Dorsolateral prefrontal cortex (tissue), 120 donors: ENCODE measurements at regions of chr2 and their contacts with region 1.

Region 1: GRCh38 chr2:57100436-57100835 is 916.6 kb downstream of the CCDC85A start:
- DNase-seq: no peak
- H3K4me3 ChIP-seq: no peak overlapping the region
- H3K27ac ChIP-seq: no peak overlapping the region
- H3K27me3 ChIP-seq: no peaks in the 10 kb centered on the region
- CTCF ChIP-seq: no peak

Region 2: DNA sequence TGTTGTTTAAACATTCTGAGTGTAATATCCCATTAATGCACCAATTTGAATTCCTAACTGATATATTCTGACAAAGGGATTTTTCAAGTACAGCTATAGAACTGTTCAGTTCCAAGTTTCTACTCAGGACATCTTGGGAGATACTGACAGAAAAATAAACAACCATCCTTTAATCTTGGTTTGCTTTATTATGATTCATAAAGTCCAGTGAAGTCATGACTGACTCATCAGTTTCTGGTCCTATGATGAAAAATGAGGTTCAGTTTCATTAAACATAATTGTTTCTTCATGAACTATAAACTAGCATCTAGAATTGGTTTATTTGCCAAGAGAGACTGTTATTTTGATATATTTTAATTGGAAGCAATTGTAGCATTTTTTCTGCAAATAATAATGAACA is 20.4 kb before region 1 on chr2:
- intact Hi-C with region 1: loop called in 1 of 2 experiments (anchors 1 kb)
- DNase-seq: no peak
- H3K4me3 ChIP-seq: no peak overlapping the region
- H3K27ac ChIP-seq: no peak overlapping the region
- H3K27me3 ChIP-seq: no peaks in the 10 kb centered on the region
- CTCF ChIP-seq: no peak

Region 3: GRCh38 chr2:57523304-57523703 is 422.9 kb after region 1 on chr2:
- intact Hi-C with region 1: no loop called
- DNase-seq: no peak
- H3K4me3 ChIP-seq: no peak overlapping the region
- H3K27ac ChIP-seq: no peak overlapping the region
- H3K27me3 ChIP-seq: no peaks in the 10 kb centered on the region
- CTCF ChIP-seq: no peak

Region 4: GRCh38 chr2:57776916-57777315 is 676.5 kb after region 1 on chr2:
- intact Hi-C with region 1: no loop called
- DNase-seq: no peak
- H3K4me3 ChIP-seq: no peak overlapping the region
- H3K27ac ChIP-seq: no peak overlapping the region
- H3K27me3 ChIP-seq: no peaks in the 10 kb centered on the region
- CTCF ChIP-seq: no peak